HepG2 (cell line): ENCODE measurements at regions of chr17 and their contacts with region 1.

Region 1: GRCh38 chr17:64420143-64420971 is 28.6 kb upstream of the MILR1 start:
- DNase-seq: peak; percentile 81
- ATAC-seq: peak; percentile 82
- H3K4me3 ChIP-seq: no peak overlapping the region
- H3K27ac ChIP-seq: no peak overlapping the region
- H3K4me1 ChIP-seq: peaks cover 31% of the 10 kb centered on the region
- H3K27me3 ChIP-seq: no peaks in the 10 kb centered on the region
- CTCF ChIP-seq: peak; percentile 86
- EP300 ChIP-seq: no peak
- POLR2A ChIP-seq: no peak
- RAD21 ChIP-seq: peak; percentile 52

Region 2: GRCh38 chr17:64306850-64307463 is 113.4 kb before region 1 on chr17:
- CTCF ChIA-PET with region 1: interaction called, 130 read pairs
- POLR2A ChIA-PET with region 1: no interaction called
- in situ Hi-C with region 1: loop called (anchors 5 kb)
- intact Hi-C with region 1: no loop called
- DNase-seq: peak; percentile 60
- ATAC-seq: peak; percentile 64
- H3K4me3 ChIP-seq: no peak overlapping the region
- H3K27ac ChIP-seq: no peak overlapping the region
- H3K4me1 ChIP-seq: peaks cover 41% of the 10 kb centered on the region
- H3K27me3 ChIP-seq: no peaks in the 10 kb centered on the region
- CTCF ChIP-seq: peak; percentile 84
- EP300 ChIP-seq: no peak
- POLR2A ChIP-seq: no peak
- RAD21 ChIP-seq: peak; percentile 77

Region 3: DNA sequence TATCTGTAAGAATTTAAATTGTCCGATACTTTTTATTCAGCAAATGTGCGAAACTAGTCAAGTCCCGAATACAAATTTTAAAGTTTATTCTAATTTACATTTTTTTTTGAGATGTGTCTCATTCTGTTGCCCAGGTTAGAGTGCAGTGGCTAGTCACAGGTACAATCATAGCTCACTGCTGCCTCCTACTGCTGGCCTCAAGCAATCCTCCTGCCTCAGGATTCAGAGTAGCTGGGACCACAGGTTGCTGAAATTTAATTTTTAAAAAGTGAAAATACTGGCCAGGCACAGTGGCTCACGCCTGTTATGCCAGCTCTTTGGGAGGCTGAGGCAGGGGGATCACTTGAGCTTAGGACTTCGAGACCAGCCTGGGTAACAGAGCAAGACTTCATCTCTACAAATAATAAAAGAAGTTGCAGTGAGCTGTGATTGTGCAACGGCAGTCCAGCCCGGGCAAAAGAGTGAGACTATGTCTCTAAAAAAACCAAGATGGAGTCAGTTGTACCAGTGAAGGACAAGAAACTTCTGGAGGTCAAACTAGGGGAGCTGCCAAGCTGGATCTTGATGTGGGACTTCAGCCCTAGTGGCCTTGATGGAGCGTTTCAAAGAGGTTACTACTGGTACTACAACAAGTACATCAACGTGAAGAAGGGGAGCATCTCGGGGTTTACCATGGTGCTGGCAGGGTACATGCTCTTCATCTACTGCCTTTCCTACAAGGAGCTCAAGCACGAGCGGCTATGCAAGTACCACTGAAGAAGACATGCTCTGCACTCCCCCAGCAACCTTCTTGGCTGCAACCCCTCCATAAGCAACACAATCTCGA is 70.9 kb after region 1 on chr17:
- CTCF ChIA-PET with region 1: interaction called, 57 read pairs
- POLR2A ChIA-PET with region 1: interaction called, 12 read pairs
- in situ Hi-C with region 1: loop called (anchors 5 kb)
- intact Hi-C with region 1: loop called (anchors 1 kb)
- DNase-seq: peak; percentile 57
- ATAC-seq: peak; percentile 63
- H3K4me3 ChIP-seq: no peak overlapping the region
- H3K27ac ChIP-seq: no peak overlapping the region
- H3K4me1 ChIP-seq: peaks cover 26% of the 10 kb centered on the region
- H3K27me3 ChIP-seq: no peaks in the 10 kb centered on the region; a peak in 1 of 5 replicates
- CTCF ChIP-seq: peak; percentile 70
- EP300 ChIP-seq: no peak
- POLR2A ChIP-seq: no peak
- RAD21 ChIP-seq: peak; percentile 40; the same call in 1 of the 2 replicates

Region 4: GRCh38 chr17:64506576-64507477 is 86.5 kb after region 1 on chr17 and contains the start of gene CEP95:
- CTCF ChIA-PET with region 1: no interaction called
- POLR2A ChIA-PET with region 1: interaction called, 18 read pairs
- in situ Hi-C with region 1: no loop called
- intact Hi-C with region 1: no loop called
- DNase-seq: peak; percentile 97
- ATAC-seq: peak; percentile 75
- H3K4me3 ChIP-seq: peak within 1 kb of the TSS; percentile 94 to 100 (median 99)
- H3K27ac ChIP-seq: peak within 1 kb of the TSS; percentile 99
- H3K4me1 ChIP-seq: peaks cover 43% of the 10 kb centered on the region
- H3K27me3 ChIP-seq: peaks cover 0 to 3% of the 10 kb centered on the region in 2 experiments; a peak in 1 of 5 replicates
- CTCF ChIP-seq: no peak
- EP300 ChIP-seq: peak in 1 of 2 experiments; percentile 8; a peak in 2 of 4 replicates
- POLR2A ChIP-seq: peak; percentile 75 to 87
- RAD21 ChIP-seq: 0 out of 2 replicates have a peak, but pooled peaks have one; percentile 34
- total RNA-seq, gene CEP95: 31.9 and 68.8 TPM in 2 replicates

Region 5: DNA sequence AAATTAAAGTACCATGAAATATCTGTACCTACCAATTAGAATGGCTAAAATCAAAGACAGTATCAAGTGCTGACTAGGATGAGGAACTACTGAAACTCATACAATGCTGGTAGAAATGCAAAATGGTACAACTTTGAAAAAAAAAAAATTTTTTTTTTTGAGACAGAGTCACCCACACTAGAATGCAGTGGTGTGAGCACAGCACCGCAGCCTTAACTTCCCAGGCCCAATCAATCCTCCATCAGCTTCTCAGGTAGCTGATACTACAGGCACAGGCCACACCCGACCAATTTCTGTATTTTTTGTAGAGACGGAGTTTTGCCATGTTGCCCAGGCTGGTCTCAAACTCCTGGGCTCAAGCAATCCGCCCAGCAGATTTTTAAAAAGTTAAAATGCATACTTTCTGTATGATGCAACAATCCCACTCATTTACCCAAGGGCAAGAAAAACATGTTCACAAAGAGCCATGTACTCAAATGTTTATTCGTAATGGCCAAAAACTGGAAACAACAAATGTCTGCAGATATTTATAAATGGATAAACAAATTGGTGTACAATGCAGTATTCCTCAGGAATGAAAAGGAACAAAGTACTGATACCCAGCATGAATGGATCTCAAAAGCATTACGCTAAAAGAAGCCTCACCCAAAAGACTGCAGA is 233.1 kb after region 1 on chr17:
- CTCF ChIA-PET with region 1: interaction called, 10 read pairs
- POLR2A ChIA-PET with region 1: no interaction called
- in situ Hi-C with region 1: no loop called
- intact Hi-C with region 1: loop called (anchors 1 kb)
- DNase-seq: no peak
- ATAC-seq: no peak
- H3K4me3 ChIP-seq: no peak overlapping the region
- H3K27ac ChIP-seq: peak overlapping the region; percentile 0
- H3K4me1 ChIP-seq: peaks cover 29% of the 10 kb centered on the region
- H3K27me3 ChIP-seq: no peaks in the 10 kb centered on the region
- CTCF ChIP-seq: no peak
- EP300 ChIP-seq: no peak
- POLR2A ChIP-seq: no peak
- RAD21 ChIP-seq: no peak